ENCODE measurements at regions of chr9 and their contacts with region 1.

Region 1: DNA sequence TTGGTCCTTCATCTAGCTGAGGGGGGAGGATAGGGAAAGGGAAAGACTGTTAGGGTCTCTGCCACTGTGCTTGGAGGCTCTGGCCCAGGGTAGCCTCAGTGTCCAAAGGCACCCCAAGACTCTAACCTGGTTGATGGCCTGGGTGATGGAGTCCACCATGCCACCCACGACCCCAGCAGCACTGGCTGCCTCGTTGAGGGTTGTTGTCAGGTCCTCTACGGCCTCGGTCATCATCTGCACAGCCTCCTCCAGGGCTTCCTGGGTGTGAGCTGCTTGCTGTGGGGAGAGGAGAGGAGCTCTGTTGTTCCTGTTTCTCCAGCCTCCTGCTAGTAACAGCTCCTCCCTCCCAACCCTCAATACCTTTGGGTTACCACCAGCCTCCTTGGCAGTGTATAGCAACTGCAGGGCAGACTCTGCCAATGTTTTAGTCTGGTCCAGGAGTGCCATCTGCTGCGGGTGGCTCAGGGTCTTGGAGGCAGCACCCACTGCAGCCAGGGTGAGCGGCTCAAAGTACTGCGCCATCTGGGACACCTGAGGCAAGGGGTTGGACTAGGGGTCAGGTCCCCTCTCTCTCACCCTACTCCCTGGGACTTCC is 16.2 kb upstream of the TPM2 start:
- DNase-seq: no peak
- H3K4me3 Mint-ChIP-seq: no peak overlapping the region
- H3K27ac Mint-ChIP-seq: no peak overlapping the region
- H3K4me1 Mint-ChIP-seq: no peaks in the 10 kb centered on the region
- H3K27me3 Mint-ChIP-seq: no peaks in the 10 kb centered on the region

Region 2: DNA sequence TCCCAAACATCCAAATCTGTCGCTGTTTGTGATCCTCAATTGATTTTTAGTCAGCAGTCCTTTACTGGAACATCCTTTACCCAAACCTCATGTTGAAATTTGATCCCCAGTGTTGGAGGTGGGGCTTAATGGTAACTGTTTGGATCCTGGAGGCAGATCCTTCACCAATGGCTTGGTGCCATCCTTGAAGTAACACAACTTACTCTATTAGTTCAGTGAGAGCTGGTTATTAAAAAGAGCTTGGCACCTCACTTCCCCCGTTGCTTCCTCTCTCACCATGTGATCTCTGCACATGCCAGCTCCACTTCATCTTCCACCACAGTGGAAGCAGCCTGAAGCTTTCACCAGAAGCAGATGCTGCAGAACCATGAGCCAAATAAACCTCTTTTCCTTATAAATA is 676.1 kb before region 1 on chr9:
- CTCF ChIA-PET with region 1: no interaction called
- POLR2A ChIA-PET with region 1: no interaction called
- DNase-seq: no peak
- H3K4me3 Mint-ChIP-seq: no peak overlapping the region
- H3K27ac Mint-ChIP-seq: no peak overlapping the region
- H3K4me1 Mint-ChIP-seq: peaks cover 13% of the 10 kb centered on the region
- H3K27me3 Mint-ChIP-seq: no peaks in the 10 kb centered on the region

Region 3: DNA sequence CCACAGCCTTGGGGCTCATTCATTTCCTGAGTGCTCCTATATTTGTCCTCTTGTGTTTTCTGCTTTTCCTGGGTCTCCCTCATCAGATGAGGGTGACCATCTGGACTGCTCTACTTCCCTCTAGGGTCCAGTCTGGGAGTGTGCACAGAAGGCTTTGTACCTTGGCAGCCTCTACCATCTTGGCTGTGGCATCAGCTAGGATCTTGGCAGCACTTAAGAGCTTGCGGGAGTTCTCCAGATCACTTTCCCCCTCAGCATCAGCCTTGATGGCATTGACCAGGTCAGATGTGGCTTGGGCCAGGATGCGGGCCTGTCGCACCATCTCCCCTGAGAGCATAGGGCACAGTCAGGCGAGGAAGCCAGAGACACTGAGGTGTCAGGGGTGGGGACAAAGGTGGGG is 10.3 kb after region 1 on chr9:
- CTCF ChIA-PET with region 1: interaction called, 13 read pairs
- POLR2A ChIA-PET with region 1: no interaction called
- DNase-seq: no peak
- H3K4me3 Mint-ChIP-seq: no peak overlapping the region
- H3K27ac Mint-ChIP-seq: no peak overlapping the region
- H3K4me1 Mint-ChIP-seq: no peaks in the 10 kb centered on the region
- H3K27me3 Mint-ChIP-seq: no peaks in the 10 kb centered on the region

Measured in activated CD4-positive, alpha-beta T cell treated with anti-CD3 and anti-CD28 coated beads, Interleukin-2, amount 10 ng/mL, durations not matched to agents 7 days and 5 days (primary cell).